ENCODE measurements at regions of chr3 and their contacts with region 1.

Region 1: GRCh38 chr3:159804726-159805410 is 183.8 kb upstream of the IL12A start:
- DNase-seq: peak; percentile 3 to 47 (median 36)
- H3K4me3 ChIP-seq: no peak overlapping the region
- H3K4me3 Mint-ChIP-seq: no peak overlapping the region
- H3K27ac ChIP-seq: no peak overlapping the region
- H3K27ac Mint-ChIP-seq: no peak overlapping the region
- H3K4me1 ChIP-seq: no peaks in the 10 kb centered on the region
- H3K4me1 Mint-ChIP-seq: no peaks in the 10 kb centered on the region
- H3K27me3 ChIP-seq: no peaks in the 10 kb centered on the region
- H3K27me3 Mint-ChIP-seq: peaks cover 0 to 1% (median 0%) of the 10 kb centered on the region in 3 donors
- CTCF ChIP-seq: peak; percentile 71

Region 2: DNA sequence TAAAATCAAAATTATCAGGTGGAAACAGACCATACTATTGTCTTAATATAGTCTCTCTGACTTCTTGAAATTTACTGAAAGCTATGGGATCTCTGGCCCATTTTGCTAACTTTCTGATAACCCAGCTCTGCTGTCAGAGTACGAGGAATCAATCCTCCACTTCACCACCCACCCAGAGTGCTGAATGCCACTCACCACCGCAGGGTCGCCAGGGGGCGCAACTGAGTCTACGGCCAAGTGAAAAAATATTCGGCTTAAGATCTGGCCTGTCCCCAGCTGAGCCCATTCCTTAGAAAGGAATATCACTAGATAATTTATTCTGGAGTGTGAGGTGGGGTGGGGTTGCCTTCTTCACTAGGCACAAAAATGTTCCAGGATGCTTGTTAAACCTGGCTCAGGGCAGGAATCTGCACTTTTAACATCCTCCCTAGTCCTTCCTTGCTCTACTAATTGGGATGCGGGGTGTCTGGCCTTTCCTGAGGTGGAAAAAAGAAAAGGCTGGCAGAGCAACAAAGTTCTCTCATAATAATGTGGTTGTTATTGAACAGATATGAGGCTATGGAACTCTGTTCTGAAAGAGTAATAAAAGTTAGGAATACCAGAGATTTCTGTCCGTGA is 482.4 kb before region 1 on chr3:
- intact Hi-C with region 1: loop called in 1 of 2 experiments (anchors 10 kb)
- DNase-seq: no peak
- H3K4me3 ChIP-seq: no peak overlapping the region
- H3K4me3 Mint-ChIP-seq: no peak overlapping the region
- H3K27ac ChIP-seq: no peak overlapping the region
- H3K27ac Mint-ChIP-seq: no peak overlapping the region
- H3K4me1 ChIP-seq: no peaks in the 10 kb centered on the region
- H3K4me1 Mint-ChIP-seq: no peaks in the 10 kb centered on the region
- H3K27me3 ChIP-seq: no peaks in the 10 kb centered on the region
- H3K27me3 Mint-ChIP-seq: peaks cover 0 to 2% (median 2%) of the 10 kb centered on the region in 3 donors
- CTCF ChIP-seq: peak; percentile 61

Region 3: GRCh38 chr3:159751146-159751545 is 53.7 kb before region 1 on chr3:
- intact Hi-C with region 1: no loop called
- DNase-seq: no peak
- H3K4me3 ChIP-seq: no peak overlapping the region
- H3K4me3 Mint-ChIP-seq: no peak overlapping the region
- H3K27ac ChIP-seq: no peak overlapping the region
- H3K27ac Mint-ChIP-seq: no peak overlapping the region
- H3K4me1 ChIP-seq: no peaks in the 10 kb centered on the region
- H3K4me1 Mint-ChIP-seq: no peaks in the 10 kb centered on the region
- H3K27me3 ChIP-seq: no peaks in the 10 kb centered on the region
- H3K27me3 Mint-ChIP-seq: peaks cover 0 to 6% (median 5%) of the 10 kb centered on the region in 3 donors
- CTCF ChIP-seq: no peak

Region 4: GRCh38 chr3:159832024-159832423 is 27.2 kb after region 1 on chr3:
- intact Hi-C with region 1: no loop called
- DNase-seq: peak; percentile 36 to 49 (median 42)
- H3K4me3 ChIP-seq: peak overlapping the region in 1 of 3 experiments; percentile 26
- H3K4me3 Mint-ChIP-seq: no peak overlapping the region
- H3K27ac ChIP-seq: no peak overlapping the region
- H3K27ac Mint-ChIP-seq: no peak overlapping the region
- H3K4me1 ChIP-seq: peaks cover 20 to 25% of the 10 kb centered on the region in 2 donors
- H3K4me1 Mint-ChIP-seq: peaks cover 25% of the 10 kb centered on the region
- H3K27me3 ChIP-seq: no peaks in the 10 kb centered on the region
- H3K27me3 Mint-ChIP-seq: no peaks in the 10 kb centered on the region
- CTCF ChIP-seq: no peak

Region 5: DNA sequence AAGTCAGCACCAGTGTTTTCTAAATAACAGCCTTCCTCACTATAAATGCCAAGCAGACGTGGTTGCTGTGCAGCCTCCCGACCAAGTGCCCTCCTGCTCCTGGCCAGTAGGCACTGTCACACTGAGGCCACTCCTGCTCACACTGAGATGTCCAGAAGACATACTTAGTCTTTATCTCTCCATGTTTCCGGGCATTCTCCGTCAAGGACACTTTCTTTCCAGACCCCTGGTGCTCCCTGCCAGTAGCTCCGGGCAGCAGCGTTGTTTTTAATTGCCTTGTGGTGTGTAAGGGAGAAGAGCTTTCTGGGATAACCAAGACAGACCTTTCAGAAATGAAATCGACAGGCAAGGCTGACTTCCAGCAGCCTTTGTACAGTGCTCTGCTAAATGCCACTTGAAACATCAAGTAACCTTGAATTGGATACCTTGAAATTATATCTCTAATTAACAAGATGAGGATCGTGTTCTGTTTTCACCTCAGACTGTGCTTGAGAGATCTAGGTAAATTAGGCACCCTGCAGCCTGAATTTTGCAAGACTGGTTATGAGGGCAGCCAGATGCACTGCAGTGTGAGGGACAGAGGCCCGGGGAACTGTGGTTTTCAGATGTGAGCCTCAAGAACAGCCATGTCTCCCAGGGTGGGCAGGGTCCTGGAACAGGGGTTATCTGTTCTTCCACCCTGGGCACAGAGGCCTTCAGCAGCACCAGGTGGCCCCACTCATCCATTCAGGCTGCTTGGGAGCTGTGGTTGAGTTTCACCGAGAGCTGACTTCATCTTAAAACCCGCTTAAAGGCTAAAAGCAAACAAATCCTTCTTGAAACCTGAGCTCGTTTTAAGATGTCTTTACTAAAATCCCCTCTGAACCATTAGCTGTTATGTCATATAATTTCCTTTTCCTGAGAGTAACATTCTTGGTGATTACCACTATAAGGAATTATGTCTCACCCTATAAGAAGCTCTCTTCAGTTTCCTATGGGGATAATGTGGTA is 78.2 kb after region 1 on chr3:
- intact Hi-C with region 1: no loop called
- DNase-seq: no peak
- H3K4me3 ChIP-seq: no peak overlapping the region
- H3K4me3 Mint-ChIP-seq: no peak overlapping the region
- H3K27ac ChIP-seq: no peak overlapping the region
- H3K27ac Mint-ChIP-seq: peak overlapping the region in 1 of 7 donors; percentile 42
- H3K4me1 ChIP-seq: peaks cover 14% of the 10 kb centered on the region in 2 donors
- H3K4me1 Mint-ChIP-seq: peaks cover 30% of the 10 kb centered on the region
- H3K27me3 ChIP-seq: no peaks in the 10 kb centered on the region
- H3K27me3 Mint-ChIP-seq: peaks cover 0 to 1% (median 0%) of the 10 kb centered on the region in 3 donors
- CTCF ChIP-seq: no peak

Measured in CD14-positive monocyte (primary cell).